ENCODE measurements at regions of chr2 and their contacts with region 1.

Region 1: DNA sequence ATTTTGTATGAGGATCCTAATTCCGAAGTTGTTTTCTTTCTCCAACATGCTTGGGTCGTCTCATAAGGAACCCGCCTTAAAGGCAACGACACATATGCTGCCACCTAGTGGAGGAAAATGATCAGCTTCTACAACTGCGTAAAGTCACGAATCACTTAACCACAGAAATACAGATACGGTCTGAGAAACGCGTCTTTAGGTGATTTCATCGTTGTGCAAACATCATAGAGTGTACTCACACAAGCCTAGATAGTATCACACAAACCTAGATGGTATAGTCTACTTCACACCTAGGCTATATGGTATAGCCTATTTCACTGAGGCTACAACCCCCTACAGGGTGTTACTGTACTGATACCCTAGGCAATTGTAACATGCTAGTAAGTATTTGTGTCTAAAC is 13.1 kb downstream of the GNLY start:
- DNase-seq: peak; percentile 92 to 96
- ATAC-seq: peak; percentile 82 to 94
- H3K4me3 ChIP-seq: no peak overlapping the region
- H3K27ac ChIP-seq: peak overlapping the region; percentile 84; a peak in 5 of 6 replicates
- H3K4me1 ChIP-seq: peaks cover 56% of the 10 kb centered on the region
- CTCF ChIP-seq: peak; percentile 98
- EP300 ChIP-seq: no peak
- POLR2A ChIP-seq: no peak
- RAD21 ChIP-seq: peak; percentile 86 to 89

Region 2: DNA sequence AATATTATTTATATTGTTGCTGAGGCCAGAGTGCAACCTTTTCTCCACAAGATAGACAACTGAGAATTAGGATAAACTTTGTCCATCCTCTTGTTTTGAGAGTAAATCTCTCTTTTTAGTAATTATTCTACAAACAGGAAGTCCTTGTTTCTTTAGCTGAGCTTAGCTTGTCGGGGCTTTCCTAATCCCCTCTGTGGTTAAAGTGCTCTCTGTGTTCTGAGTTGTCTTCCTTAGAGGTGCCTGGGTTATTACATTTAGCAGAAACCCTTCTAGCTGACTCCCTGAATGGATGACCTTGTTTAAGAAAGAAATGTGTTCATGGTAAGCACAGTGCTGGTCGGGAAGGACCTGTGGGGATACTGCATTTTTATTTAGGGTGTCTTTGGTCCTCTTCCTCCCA is 78.6 kb before region 1 on chr2:
- CTCF ChIA-PET with region 1: interaction called, 241 read pairs
- POLR2A ChIA-PET with region 1: no interaction called
- DNase-seq: no peak
- ATAC-seq: no peak
- H3K4me3 ChIP-seq: no peak overlapping the region
- H3K27ac ChIP-seq: no peak overlapping the region
- H3K4me1 ChIP-seq: no peaks in the 10 kb centered on the region
- CTCF ChIP-seq: no peak
- EP300 ChIP-seq: no peak
- POLR2A ChIP-seq: no peak
- RAD21 ChIP-seq: no peak

Region 3: GRCh38 chr2:85648619-85649018 is 58.7 kb before region 1 on chr2:
- CTCF ChIA-PET with region 1: interaction called, 111 read pairs
- POLR2A ChIA-PET with region 1: no interaction called
- DNase-seq: peak; percentile 72 to 76
- ATAC-seq: peak; percentile 72 to 84
- H3K4me3 ChIP-seq: no peak overlapping the region
- H3K27ac ChIP-seq: peak overlapping the region; percentile 80 to 91
- H3K4me1 ChIP-seq: peaks cover 59% of the 10 kb centered on the region
- CTCF ChIP-seq: peak; percentile 71
- EP300 ChIP-seq: no peak
- POLR2A ChIP-seq: no peak
- RAD21 ChIP-seq: peak; percentile 63 to 67

Region 4: GRCh38 chr2:85662899-85663593 is 44.3 kb before region 1 on chr2:
- CTCF ChIA-PET with region 1: interaction called, 15 read pairs
- POLR2A ChIA-PET with region 1: no interaction called
- DNase-seq: peak in 1 of 2 experiments; percentile 67
- ATAC-seq: peak; percentile 72 to 80
- H3K4me3 ChIP-seq: no peak overlapping the region
- H3K27ac ChIP-seq: peak overlapping the region in 1 of 2 experiments; percentile 74; a peak in 3 of 6 replicates
- H3K4me1 ChIP-seq: peaks cover 15% of the 10 kb centered on the region
- CTCF ChIP-seq: no peak
- EP300 ChIP-seq: no peak
- POLR2A ChIP-seq: 0 out of 2 replicates have a peak, but pooled peaks have one; percentile 5
- RAD21 ChIP-seq: no peak

Region 5: GRCh38 chr2:85813982-85814801 is 106.9 kb after region 1 on chr2:
- CTCF ChIA-PET with region 1: interaction called, 170 read pairs
- POLR2A ChIA-PET with region 1: no interaction called
- DNase-seq: peak; percentile 91 to 93
- ATAC-seq: peak; percentile 97 to 99
- H3K4me3 ChIP-seq: no peak overlapping the region
- H3K27ac ChIP-seq: peak overlapping the region; percentile 52 to 71
- H3K4me1 ChIP-seq: peaks cover 24% of the 10 kb centered on the region
- CTCF ChIP-seq: peak; percentile 98
- EP300 ChIP-seq: no peak
- POLR2A ChIP-seq: no peak
- RAD21 ChIP-seq: peak; percentile 100

Measured in A549 (cell line).